Activated naive CD4-positive, alpha-beta T cell treated with anti-CD3 and anti-CD28 coated beads for 36 hours (primary cell): ENCODE measurements at regions of chr2 and their contacts with region 1.

Region 1: DNA sequence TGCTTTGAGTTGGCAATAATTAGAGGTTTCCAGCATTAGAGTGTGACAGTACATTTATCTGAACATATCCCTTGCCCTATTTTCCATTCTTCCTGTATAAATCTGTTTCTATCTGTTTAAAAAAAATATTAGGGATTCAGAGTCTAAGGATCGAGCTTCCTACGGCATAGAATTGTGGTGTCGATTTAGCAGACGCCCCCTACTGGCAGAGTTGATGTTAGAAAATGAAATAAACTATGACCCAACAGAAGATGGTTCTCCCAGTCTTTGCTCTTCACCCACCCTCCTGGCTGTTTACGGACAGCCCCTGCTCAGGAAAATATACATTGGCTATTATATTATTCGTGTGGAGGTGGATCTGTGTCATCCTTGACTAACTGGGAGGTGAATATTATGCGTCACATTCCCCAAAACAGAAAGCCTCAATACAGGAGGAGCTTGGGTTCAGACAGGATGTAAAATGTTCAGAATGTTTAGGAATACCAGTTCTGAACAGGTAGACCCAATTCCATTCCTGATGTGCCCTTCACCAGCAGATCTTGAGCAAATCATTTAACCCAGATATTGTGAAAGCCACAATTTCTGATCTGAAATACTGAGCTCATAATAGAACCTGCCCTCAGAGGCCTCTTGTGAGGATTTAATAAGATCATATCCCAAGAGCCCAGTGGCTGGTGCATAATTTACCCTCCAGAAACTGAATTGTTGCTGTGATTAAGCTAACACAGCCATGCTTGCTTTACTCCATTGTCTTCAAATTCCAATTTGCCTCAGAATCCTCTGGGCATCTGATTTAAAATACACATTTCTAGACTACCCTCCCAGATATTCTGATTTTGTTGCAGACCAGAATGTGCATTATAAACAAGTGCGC is 10.8 kb upstream of the ERMN start:
- DNase-seq: peak; percentile 68
- H3K4me3 Mint-ChIP-seq: peak overlapping the region; percentile 40
- H3K27ac Mint-ChIP-seq: no peak overlapping the region
- H3K4me1 Mint-ChIP-seq: peaks cover 78% of the 10 kb centered on the region
- H3K27me3 Mint-ChIP-seq: no peaks in the 10 kb centered on the region

Region 2: DNA sequence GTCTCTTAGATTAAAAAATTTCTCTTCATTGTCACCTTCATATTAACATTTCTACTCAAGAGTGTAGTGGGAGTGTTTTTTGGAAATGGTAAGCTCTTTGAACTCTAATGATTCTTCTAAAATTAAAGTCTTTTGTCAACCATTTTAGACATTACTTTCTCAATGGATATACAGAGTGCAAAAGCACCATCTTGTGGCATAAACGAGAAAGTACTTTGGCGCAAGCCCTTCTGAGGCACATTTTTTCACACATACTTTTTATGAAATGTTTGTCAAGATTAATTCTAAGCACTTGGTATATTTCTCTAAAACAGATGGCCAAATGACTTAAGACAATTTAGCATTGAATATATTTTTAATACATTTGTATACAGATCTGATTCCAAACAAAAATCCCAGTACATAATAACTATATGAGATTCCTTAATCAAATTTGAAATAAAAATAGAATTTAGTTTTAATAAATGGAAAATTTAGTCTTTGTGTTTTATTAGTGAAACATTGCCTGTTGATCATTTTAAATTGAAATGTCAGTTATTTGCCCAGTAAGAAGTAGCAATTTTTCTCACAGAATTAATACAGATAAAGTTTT is 142.2 kb before region 1 on chr2:
- CTCF ChIA-PET with region 1: no interaction called
- intact Hi-C with region 1: no loop called
- DNase-seq: peak; percentile 35
- H3K4me3 Mint-ChIP-seq: no peak overlapping the region
- H3K27ac Mint-ChIP-seq: no peak overlapping the region
- H3K4me1 Mint-ChIP-seq: no peaks in the 10 kb centered on the region
- H3K27me3 Mint-ChIP-seq: peaks cover 2% of the 10 kb centered on the region

Region 3: GRCh38 chr2:157349949-157350515 is 13.7 kb after region 1 on chr2:
- CTCF ChIA-PET with region 1: interaction called, 63 read pairs
- intact Hi-C with region 1: loop called (anchors 1 kb)
- DNase-seq: no peak
- H3K4me3 Mint-ChIP-seq: no peak overlapping the region
- H3K27ac Mint-ChIP-seq: no peak overlapping the region
- H3K4me1 Mint-ChIP-seq: peaks cover 49% of the 10 kb centered on the region
- H3K27me3 Mint-ChIP-seq: no peaks in the 10 kb centered on the region

Region 4: GRCh38 chr2:157355618-157356017 is 19.2 kb after region 1 on chr2:
- CTCF ChIA-PET with region 1: interaction called, 25 read pairs
- intact Hi-C with region 1: no loop called
- DNase-seq: no peak
- H3K4me3 Mint-ChIP-seq: no peak overlapping the region
- H3K27ac Mint-ChIP-seq: no peak overlapping the region
- H3K4me1 Mint-ChIP-seq: peaks cover 48% of the 10 kb centered on the region
- H3K27me3 Mint-ChIP-seq: no peaks in the 10 kb centered on the region

Region 5: DNA sequence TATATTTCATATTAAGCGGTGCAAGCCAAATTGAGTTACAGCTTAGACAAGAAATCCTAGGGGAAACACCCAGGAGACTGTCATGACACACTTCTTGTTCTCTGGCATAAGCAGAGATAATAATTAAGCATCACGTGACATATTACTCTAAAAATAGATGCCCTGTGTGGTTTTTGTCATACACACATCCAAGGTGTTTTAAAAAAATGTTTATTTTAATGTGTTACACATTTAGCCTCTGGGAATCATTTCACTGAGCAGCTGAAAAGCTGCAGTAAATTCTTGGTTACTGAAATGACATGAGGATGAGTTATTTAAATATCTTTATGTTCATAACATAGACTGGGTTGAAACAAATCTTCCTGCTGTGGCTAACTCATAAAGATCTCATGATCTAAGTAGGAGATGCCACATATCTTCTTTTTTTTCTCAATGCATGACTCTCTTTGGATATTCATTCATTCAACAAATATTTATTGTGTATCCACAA is 27.3 kb after region 1 on chr2:
- CTCF ChIA-PET with region 1: interaction called, 25 read pairs
- intact Hi-C with region 1: loop called (anchors 1 kb)
- DNase-seq: no peak
- H3K4me3 Mint-ChIP-seq: peak overlapping the region; percentile 3
- H3K27ac Mint-ChIP-seq: peak overlapping the region; percentile 65
- H3K4me1 Mint-ChIP-seq: peaks cover 36% of the 10 kb centered on the region
- H3K27me3 Mint-ChIP-seq: no peaks in the 10 kb centered on the region

Region 6: GRCh38 chr2:157404363-157404762 is 68.0 kb after region 1 on chr2:
- CTCF ChIA-PET with region 1: interaction called, 57 read pairs
- intact Hi-C with region 1: loop called (anchors 1 kb)
- DNase-seq: peak; percentile 80
- H3K4me3 Mint-ChIP-seq: no peak overlapping the region
- H3K27ac Mint-ChIP-seq: peak overlapping the region; percentile 72
- H3K4me1 Mint-ChIP-seq: peaks cover 76% of the 10 kb centered on the region
- H3K27me3 Mint-ChIP-seq: no peaks in the 10 kb centered on the region

Region 7: GRCh38 chr2:157413326-157414035 is 77.1 kb after region 1 on chr2:
- CTCF ChIA-PET with region 1: interaction called, 43 read pairs
- intact Hi-C with region 1: loop called (anchors 1 kb)
- DNase-seq: peak; percentile 78
- H3K4me3 Mint-ChIP-seq: peak overlapping the region; percentile 64
- H3K27ac Mint-ChIP-seq: peak overlapping the region; percentile 99
- H3K4me1 Mint-ChIP-seq: peaks cover 90% of the 10 kb centered on the region
- H3K27me3 Mint-ChIP-seq: no peaks in the 10 kb centered on the region

Region 8: GRCh38 chr2:157480182-157480961 is 144.0 kb after region 1 on chr2:
- CTCF ChIA-PET with region 1: interaction called, 6 read pairs
- intact Hi-C with region 1: loop called (anchors 1 kb)
- DNase-seq: peak; percentile 83
- H3K4me3 Mint-ChIP-seq: peak overlapping the region; percentile 64
- H3K27ac Mint-ChIP-seq: peak overlapping the region; percentile 95
- H3K4me1 Mint-ChIP-seq: peaks cover 85% of the 10 kb centered on the region
- H3K27me3 Mint-ChIP-seq: no peaks in the 10 kb centered on the region